Left ventricle myocardium inferior (tissue), 1 donor: ENCODE measurements at regions of chr1 and their contacts with region 1.

Region 1: GRCh38 chr1:151059908-151060656 is at the start of gene MLLT11:
- DNase-seq: peak; percentile 35
- H3K4me3 ChIP-seq: peak within 1 kb of the TSS; percentile 92
- H3K27ac ChIP-seq: peak within 1 kb of the TSS; percentile 96
- H3K4me1 ChIP-seq: peaks cover 55% of the 10 kb centered on the region
- H3K27me3 ChIP-seq: no peaks in the 10 kb centered on the region
- CTCF ChIP-seq: peak; percentile 18
- total RNA-seq, gene MLLT11: 34.1 TPM

Region 2: GRCh38 chr1:151008190-151008860 is 51.8 kb before region 1 on chr1 and contains the start of gene PRUNE1:
- intact Hi-C with region 1: loop called (anchors 10 kb)
- DNase-seq: peak; percentile 97
- H3K4me3 ChIP-seq: peak within 1 kb of the TSS; percentile 79
- H3K27ac ChIP-seq: peak within 1 kb of the TSS; percentile 94
- H3K4me1 ChIP-seq: peaks cover 93% of the 10 kb centered on the region
- H3K27me3 ChIP-seq: no peaks in the 10 kb centered on the region
- CTCF ChIP-seq: no peak
- total RNA-seq, gene PRUNE1: 42.8 TPM

Region 3: DNA sequence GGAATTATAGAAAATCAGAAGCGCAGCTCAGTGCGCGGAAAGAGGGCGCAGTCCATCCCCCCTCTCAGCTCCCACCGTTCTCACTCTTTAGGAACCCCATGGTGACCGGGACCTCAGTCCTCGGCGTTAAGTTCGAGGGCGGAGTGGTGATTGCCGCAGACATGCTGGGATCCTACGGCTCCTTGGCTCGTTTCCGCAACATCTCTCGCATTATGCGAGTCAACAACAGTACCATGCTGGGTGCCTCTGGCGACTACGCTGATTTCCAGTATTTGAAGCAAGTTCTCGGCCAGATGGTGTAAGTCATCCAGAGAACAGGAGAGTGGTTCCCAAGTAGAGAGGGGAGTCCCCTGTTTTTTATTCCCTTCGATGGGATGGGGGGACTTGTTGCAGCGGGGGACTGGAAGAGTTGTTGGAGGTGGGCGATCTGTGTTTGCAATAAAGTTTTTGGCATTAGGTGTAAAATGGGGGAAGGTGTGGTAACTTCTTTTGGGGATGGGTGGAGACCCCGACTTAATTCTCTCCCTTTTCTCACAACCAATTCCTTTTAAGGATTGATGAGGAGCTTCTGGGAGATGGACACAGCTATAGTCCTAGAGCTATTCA is 339.9 kb after region 1 on chr1:
- intact Hi-C with region 1: no loop called
- DNase-seq: no peak
- H3K4me3 ChIP-seq: peak overlapping the region; percentile 95
- H3K27ac ChIP-seq: peak overlapping the region; percentile 84
- H3K4me1 ChIP-seq: peaks cover 29% of the 10 kb centered on the region
- H3K27me3 ChIP-seq: no peaks in the 10 kb centered on the region
- CTCF ChIP-seq: no peak